Cardiac septum (tissue), 1 donor: ENCODE measurements at regions of chr16 and their contacts with region 1.

Region 1: DNA sequence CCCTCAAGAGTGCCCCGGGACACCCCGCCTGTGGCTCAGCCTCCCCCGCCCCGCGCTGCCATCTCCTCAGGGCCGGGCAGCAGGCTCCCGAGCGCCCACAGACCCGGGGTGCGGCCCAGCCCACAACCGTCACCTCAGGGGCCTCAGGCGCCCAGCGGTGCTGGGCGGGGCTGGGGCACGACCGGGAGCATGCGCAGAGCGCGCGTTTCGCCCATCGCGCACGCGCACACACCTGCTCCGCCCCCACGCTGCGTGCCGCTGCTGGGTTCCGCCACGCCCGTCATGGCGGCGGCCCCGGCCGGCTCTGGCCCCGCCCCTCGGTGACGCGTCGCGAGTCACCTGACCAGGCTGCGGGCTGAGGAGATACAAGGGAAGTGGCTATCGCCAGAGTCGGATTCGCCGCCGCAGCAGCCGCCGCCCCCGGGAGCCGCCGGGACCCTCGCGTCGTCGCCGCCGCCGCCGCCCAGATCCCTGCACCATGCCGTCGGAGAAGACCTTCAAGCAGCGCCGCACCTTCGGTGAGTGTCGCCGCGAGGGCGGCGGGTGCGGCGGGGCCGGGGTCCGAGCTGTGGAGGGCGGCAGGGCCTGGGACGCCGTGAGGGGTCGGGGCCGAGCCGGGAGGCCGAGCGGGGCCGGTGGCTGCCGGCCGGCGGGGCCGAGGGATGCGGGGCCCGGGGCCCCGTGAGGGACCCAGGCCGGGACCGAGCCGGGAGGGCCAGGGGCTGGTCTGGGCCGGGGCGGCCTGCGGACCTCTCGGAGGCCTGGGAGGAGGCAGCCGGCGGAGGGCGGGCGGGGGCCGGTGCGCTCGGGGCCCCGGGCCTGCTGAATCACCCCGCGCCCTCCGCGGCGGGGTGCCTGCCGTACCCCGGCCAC is at the start of gene MAP1LC3B:
- DNase-seq: peak; percentile 99
- total RNA-seq, gene MAP1LC3B: 113 TPM

Region 2: DNA sequence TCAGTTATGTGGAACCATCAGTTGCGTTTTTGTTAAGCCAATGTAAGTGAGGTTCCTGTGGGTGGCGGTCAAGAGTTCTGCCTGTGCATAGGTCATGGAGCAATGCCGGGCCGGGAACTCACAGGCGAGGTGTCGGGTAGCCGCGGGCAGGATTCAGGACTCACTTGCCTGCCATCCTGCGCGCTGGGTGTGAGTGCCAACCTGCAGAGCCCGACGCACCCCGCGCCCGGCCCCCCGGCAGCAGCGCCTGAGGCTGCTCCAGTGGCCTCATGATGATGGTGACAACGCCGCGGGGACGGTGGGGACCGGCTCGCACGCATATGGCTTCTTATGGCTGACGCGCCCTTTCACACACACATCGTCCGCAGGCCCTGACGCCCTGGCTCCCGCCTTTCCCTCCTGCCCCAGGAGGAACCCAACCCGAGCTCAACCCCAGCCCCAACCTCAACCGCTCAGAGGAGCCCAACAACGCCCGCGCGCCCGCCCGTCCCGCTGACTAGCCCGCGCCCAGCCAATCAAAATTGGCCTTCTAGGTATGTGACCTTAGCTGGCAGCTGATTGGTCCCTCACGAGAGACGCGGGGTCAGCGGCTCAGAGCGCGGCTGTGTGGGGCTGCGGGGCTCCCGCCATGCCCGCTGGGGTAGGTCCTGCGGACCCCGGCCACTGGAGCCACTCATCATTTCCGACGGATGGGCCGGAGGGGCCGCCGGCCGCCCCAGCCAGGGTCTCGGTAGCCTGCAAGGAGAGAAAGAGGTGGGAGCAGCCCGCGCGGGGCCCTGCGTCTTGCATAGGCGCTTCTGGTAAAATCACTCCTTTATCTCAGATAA is 75.0 kb before region 1 on chr16 and contains the start of gene C16orf95:
- intact Hi-C with region 1: loop called (anchors 2 kb)
- DNase-seq: peak; percentile 98
- total RNA-seq, gene C16orf95: 3.2 TPM

Region 3: GRCh38 chr16:87499189-87499486 is 107.0 kb after region 1 on chr16:
- intact Hi-C with region 1: loop called (anchors 5 kb)
- DNase-seq: no peak